K562 (cell line): ENCODE measurements at regions of chr11 and their contacts with region 1.

Region 1: DNA sequence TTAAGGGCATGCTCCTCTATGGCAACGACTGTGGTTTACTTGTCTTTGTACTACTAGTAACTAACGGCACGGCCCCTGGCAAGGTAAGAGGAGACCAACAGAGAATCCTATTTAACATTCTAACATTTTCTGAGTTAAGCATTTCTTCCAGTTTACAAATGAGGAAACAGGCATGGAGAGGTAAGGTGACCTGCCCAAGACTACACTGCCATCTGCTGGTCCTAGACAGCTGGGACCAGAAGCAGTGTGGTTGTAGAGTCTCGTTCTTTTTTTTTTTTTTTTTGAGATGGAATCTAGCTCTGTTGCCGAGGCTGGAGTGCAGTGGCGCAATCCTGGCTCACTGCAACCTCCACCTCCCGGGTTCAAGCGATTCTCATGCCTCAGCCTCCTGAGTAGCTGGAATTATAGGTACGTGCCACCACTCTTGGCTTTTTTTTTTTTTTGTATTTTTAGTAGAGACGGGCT is 5.3 kb upstream of the RAPSN start:
- DNase-seq: peak; percentile 61 to 87 (median 74)
- ATAC-seq: peak; percentile 98
- H3K4me3 ChIP-seq: no peak overlapping the region
- H3K27ac ChIP-seq: no peak overlapping the region
- H3K4me1 ChIP-seq: peaks cover 0 to 2% of the 10 kb centered on the region in 2 experiments; a peak in 1 of 5 replicates
- H3K27me3 ChIP-seq: no peaks in the 10 kb centered on the region; a peak in 1 of 5 replicates
- CTCF ChIP-seq: peak; percentile 84 to 95 (median 87)
- EP300 ChIP-seq: 0 out of 2 replicates have a peak, but pooled peaks have one; percentile 6
- POLR2A ChIP-seq: no peak
- RAD21 ChIP-seq: peak; percentile 66 to 76

Region 2: DNA sequence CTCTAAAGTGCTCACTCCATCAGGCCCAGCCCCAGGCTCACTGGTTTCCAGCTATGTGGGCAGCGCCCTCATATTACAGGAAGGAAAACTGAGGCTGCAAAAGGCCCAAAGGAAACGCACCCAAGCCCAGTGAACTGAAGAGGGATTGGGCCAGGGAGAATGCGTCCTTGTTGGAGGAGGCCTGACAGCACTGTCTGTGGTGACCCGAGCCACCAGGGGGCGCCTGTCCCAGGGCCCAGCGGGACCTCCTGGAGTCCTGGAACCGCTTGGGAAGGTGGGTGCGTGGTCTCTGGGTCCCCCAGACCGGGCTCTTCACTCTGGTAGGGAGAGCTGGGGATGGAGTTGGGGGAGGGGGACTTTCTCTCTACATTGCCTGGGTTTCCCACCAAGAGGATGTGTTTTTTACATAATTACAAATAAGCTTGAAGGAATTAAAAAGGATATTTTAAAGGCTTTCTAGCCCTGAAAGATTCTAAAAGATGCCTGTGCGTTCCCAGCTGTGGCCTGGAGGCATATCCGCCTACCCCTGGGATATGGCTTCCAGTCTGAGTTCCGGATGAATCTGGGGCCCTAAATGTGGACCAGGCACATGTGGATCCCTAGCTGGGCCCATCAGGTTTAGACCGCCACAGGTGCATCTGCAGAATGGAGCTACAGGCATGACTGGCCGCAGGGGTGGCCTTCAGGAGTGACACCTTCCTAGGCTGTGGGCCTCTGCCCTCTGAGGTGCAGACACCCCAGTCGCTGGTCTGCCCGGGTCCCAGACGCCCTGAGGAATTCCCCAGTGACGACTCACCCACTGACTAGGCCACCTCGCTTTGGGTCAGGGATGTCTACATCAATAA is 80.1 kb before region 1 on chr11:
- CTCF ChIA-PET with region 1: interaction called, 6 read pairs
- POLR2A ChIA-PET with region 1: no interaction called
- in situ Hi-C with region 1: no loop called
- intact Hi-C with region 1: loop called (anchors 1 kb)
- DNase-seq: peak; percentile 81 to 88 (median 85)
- ATAC-seq: peak; percentile 72
- H3K4me3 ChIP-seq: no peak overlapping the region
- H3K27ac ChIP-seq: no peak overlapping the region
- H3K4me1 ChIP-seq: peaks cover 37 to 54% of the 10 kb centered on the region in 2 experiments
- H3K27me3 ChIP-seq: no peaks in the 10 kb centered on the region
- CTCF ChIP-seq: peak; percentile 86 to 93 (median 93)
- EP300 ChIP-seq: no peak
- POLR2A ChIP-seq: no peak
- RAD21 ChIP-seq: peak; percentile 78 to 88

Region 3: DNA sequence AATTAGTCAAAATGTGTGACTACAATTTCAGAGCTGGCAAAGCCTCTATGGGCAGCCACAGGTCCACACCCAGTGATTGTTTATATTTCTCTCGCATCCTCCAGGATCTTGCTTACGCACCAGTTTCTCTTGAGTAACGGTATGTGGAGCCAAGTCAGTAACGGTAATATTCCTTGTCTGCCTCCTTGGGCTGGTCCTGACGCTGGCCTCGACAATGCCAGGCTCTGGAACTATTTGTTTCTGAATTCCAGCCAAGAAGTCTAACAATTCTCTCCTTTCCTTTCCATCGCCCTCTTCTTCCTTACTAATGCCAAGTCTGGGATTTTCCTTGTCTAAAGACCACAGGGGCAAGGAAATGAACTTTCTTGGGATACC is 403.9 kb after region 1 on chr11:
- CTCF ChIA-PET with region 1: no interaction called
- POLR2A ChIA-PET with region 1: no interaction called
- in situ Hi-C with region 1: no loop called
- intact Hi-C with region 1: loop called (anchors 10 kb)
- DNase-seq: no peak
- ATAC-seq: no peak
- H3K4me3 ChIP-seq: no peak overlapping the region
- H3K27ac ChIP-seq: no peak overlapping the region
- H3K4me1 ChIP-seq: peaks cover 0 to 9% of the 10 kb centered on the region in 2 experiments; a peak in 3 of 5 replicates
- H3K27me3 ChIP-seq: no peaks in the 10 kb centered on the region
- CTCF ChIP-seq: no peak
- EP300 ChIP-seq: no peak
- POLR2A ChIP-seq: no peak
- RAD21 ChIP-seq: no peak